ENCODE measurements at regions of chr11 and their contacts with region 1.

Region 1: DNA sequence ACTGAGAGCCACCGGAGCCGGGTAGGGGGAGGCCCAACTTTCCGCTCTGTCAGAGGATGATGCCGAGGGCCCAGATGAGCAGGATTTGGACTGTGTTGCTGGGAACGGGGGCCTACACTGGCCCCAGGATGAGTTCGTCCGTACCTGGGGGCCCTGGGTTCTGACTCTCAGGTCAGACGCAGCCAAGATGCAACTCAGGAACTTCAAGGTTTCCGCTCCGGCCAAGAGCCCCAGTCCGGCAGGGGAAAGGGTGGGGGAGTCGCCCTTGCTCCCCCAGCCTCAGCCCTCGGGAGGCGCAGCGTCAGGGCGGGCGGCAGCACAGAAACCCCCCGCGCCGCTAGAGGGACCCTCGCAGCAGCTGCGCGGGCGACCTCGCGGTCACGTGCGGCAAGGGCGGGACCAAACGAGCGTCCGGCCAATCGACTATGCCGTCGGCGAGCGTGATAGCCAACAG is 241 bp upstream of the ARL2 start:
- DNase-seq: peak; percentile 96
- CTCF ChIP-seq: peak; percentile 76

Region 2: DNA sequence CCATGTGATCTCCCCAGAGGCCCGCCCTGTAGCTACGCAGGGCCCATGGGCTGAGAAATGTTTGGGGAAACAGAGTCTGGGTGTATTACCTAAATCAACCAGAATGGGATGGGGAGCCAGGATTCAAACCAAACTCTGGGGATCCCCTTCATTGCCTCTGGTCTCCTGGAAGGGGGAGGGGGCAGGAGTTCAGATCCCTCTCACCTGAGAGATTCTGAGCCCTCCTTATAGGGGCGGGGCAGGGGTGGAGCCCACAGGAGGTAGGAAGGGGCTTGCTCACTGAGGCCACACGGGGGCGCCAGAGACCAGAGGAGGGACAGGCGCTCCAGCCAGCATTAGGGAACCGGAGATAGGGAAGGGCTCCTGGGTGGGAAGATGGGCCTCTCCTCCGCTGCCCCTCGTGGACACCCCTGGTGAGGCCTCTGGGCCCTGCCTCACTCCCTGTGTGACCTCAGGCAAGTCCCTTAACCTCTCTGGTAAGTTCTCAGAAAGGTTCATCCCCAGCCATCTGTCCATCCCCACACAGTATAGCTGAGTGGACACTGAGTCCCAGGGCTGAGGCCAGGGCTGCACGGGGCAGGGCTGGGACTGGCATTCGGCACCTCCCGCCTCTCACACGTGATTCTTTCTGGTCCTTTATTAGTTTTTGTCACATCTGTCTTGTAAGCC is 166.6 kb before region 1 on chr11:
- CTCF ChIA-PET with region 1: interaction called, 21 read pairs
- POLR2A ChIA-PET with region 1: interaction called, 4 read pairs
- DNase-seq: peak; percentile 88
- CTCF ChIP-seq: peak; percentile 98

Region 3: GRCh38 chr11:64996710-64997380 is 16.9 kb before region 1 on chr11 and contains the start of gene BATF2:
- CTCF ChIA-PET with region 1: interaction called, 34 read pairs
- POLR2A ChIA-PET with region 1: no interaction called
- DNase-seq: peak; percentile 62
- CTCF ChIP-seq: peak; percentile 29

Region 4: DNA sequence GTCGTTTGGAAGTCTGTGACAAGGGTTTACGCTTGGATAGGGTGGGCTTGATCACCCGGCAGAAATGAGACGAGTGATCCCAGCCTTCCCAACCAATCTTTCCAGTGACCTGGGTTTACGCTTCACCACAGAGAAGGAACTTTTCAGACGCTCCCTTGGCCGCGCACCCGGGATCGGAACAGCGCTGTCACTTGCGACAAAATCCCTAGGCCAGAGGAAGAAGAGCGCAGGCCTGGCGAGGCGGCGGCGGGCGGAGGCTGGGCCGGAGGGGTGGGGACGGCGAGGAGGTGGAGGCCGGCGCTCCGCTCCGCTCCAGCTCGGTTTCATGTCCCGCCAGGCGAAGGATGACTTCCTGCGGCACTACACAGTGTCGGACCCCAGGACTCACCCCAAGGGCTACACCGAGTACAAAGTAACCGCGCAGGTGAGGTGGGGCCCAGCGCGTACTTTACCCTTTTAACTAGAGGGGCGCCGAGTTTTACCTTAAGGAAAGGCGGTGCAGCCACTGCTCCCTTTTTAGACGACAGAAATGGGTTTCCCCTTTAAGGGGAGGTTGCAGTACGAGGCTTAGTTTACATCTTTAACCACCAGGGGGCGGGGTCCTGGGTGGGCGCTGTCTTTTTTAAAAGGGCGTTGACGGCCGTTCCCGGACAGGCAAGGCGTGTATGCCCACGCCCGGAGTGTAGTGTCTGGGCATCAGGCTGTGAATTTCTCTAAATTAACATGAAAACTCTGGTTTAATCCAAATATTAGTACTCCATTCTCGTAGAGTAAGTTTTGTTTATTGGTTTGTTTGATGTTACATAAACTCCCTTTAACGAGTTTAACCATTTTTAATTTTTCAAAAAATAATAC is 13.7 kb after region 1 on chr11 and contains the start of gene SNX15:
- CTCF ChIA-PET with region 1: interaction called, 75 read pairs
- POLR2A ChIA-PET with region 1: interaction called, 5 read pairs
- DNase-seq: peak; percentile 92
- CTCF ChIP-seq: peak; percentile 32

Region 5: GRCh38 chr11:65069217-65069616 is 55.5 kb after region 1 on chr11:
- CTCF ChIA-PET with region 1: interaction called, 11 read pairs
- POLR2A ChIA-PET with region 1: no interaction called
- DNase-seq: no peak
- CTCF ChIP-seq: no peak

Region 6: DNA sequence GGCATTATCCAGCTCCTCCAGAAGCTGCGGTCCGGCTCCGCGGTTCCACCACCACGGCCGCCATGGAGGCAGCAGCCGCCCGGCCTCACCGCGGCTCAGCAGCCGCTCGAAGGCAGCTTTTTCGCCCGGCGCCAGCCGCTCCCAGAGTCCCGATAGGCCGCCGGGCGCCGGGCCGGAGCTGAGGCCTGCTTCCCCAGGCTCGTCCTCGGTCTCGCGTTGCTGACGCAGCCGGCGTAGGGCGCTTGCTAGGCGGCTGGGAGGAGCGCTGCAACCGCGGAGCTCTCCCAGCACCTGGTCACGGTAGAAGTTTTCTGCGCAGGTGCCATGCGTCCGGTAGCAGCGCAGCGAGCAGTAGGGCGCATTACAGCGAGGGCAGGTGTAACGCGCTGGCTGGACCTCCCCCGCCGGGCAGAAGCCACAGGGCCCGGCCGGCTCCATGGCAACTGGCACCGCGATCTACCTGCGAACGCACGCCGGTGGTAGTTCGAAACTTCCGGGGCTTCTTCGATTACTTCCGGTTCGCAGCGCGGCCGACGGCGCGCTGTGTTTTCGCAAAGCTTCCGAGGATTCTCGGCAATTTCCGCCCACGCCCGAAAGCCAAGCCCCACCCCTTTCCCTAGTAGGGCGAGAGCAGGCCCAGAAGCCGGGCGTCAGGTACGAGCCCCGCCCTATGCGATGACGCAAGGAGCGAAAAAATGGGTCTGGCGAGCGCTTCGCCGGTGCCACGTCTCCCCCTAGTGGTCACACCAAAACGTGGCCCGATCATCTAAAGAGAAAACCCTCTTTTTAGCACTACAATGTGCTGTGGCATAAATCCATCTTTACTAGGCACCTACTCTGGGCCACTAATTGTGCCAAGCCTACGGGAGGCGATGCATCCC is 103.7 kb after region 1 on chr11 and contains the start of gene ZNHIT2:
- CTCF ChIA-PET with region 1: interaction called, 73 read pairs
- POLR2A ChIA-PET with region 1: interaction called, 7 read pairs
- DNase-seq: peak; percentile 95
- CTCF ChIP-seq: peak; percentile 84